GM10248 (cell line): ENCODE measurements at regions of chr20 and their contacts with region 1.

Region 1: GRCh38 chr20:36717657-36718056 is 28.2 kb downstream of the NDRG3 start:
- DNase-seq: no peak
- CTCF ChIP-seq: peak; percentile 28

Region 2: GRCh38 chr20:36676701-36677421 is 40.8 kb before region 1 on chr20:
- CTCF ChIA-PET with region 1: no interaction called
- POLR2A ChIA-PET with region 1: no interaction called
- DNase-seq: no peak
- CTCF ChIP-seq: no peak

Region 3: DNA sequence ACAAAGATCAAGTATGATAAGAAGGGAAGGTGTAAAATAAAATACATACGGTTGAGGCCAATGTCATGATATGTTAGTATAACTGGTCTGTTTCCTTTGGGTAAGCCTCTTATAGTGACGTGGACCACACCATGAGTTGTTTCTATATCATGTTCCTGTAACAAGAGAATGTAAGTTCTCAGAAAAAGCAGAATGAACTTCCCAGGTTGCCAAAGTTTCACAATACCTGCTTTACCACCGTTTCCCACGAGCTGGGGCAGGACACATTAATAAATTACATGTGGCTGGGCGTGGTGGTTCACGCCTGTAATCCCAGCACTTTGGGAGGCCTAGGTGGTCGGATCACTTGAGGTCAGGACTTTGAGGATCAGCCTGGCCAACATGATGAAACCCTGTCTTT is 29.0 kb before region 1 on chr20:
- CTCF ChIA-PET with region 1: no interaction called
- POLR2A ChIA-PET with region 1: no interaction called
- DNase-seq: no peak
- CTCF ChIP-seq: no peak

Region 4: DNA sequence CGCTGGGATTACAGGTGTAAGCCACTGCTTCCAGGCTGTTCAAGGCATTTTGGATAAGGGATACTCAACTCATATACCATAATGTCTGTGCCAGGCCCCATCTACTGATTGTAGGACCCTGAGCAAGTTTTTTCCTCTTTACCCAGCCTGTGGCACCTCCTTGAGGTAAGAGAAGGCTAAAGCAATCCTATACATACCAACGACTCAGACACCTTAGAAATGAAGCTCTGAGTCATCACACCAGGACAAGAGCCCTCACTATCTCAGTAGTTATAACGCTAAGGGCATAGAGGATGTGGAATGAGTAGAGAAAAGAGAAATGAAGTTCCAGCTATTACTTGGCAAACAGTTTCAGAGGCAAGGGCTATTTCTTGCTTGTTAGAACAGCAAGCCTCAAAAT is 11.3 kb after region 1 on chr20:
- CTCF ChIA-PET with region 1: interaction called, 10 read pairs
- POLR2A ChIA-PET with region 1: no interaction called
- DNase-seq: peak; percentile 37
- CTCF ChIP-seq: no peak

Region 5: DNA sequence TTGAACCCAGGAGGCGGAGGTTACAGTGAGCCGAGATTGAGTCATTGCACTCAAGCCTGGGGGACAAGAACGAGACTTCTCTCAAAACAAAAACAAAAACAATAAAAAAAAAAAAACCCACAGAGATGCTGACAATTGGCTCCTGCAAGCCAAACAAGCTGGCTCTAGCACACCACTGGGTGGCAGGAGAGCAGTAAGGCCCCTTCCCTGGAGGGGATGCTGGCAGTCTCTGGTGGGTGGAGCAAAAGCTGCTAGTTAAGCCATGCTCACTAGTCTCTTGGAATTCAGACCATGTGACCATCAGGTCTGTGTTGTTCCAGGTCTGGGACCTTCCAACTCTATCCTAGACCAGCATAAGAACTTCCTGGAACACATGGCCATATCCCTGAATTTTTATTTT is 74.8 kb after region 1 on chr20:
- CTCF ChIA-PET with region 1: no interaction called
- POLR2A ChIA-PET with region 1: no interaction called
- DNase-seq: peak; percentile 57
- CTCF ChIP-seq: peak; percentile 29

Region 6: GRCh38 chr20:37511610-37512275 is 794.1 kb after region 1 on chr20:
- CTCF ChIA-PET with region 1: no interaction called
- POLR2A ChIA-PET with region 1: no interaction called
- DNase-seq: no peak
- CTCF ChIP-seq: no peak